ENCODE measurements at regions of chr17 and their contacts with region 1.

Region 1: DNA sequence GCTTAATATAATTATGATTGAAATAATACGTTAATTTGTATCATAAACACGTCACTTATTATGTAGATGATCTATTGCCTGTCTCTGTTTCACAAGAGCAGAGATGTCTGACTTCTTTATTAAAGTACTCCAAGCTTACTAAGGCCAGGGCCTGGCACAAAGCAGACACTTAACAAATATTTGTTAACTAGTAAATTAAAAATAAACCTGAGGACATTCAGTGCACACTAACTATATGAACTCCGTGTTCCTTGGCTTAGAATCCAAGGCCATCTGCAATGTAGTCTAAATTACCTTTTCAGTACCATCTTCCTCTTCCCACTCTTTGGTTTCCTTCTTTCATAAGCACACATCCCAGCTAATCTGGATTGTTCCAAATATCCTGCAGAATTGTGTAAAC is 210.8 kb upstream of the SOX9 start:
- DNase-seq: peak in 1 of 2 donors; percentile 41
- ATAC-seq: peak; percentile 80 to 94
- H3K4me3 ChIP-seq: no peak overlapping the region
- H3K27ac ChIP-seq: peak overlapping the region; percentile 21 to 82 (median 41)
- H3K4me1 ChIP-seq: peaks cover 12 to 36% of the 10 kb centered on the region in 2 donors
- H3K27me3 ChIP-seq: no peaks in the 10 kb centered on the region
- CTCF ChIP-seq: no peak
- POLR2A ChIP-seq: no peak

Region 2: DNA sequence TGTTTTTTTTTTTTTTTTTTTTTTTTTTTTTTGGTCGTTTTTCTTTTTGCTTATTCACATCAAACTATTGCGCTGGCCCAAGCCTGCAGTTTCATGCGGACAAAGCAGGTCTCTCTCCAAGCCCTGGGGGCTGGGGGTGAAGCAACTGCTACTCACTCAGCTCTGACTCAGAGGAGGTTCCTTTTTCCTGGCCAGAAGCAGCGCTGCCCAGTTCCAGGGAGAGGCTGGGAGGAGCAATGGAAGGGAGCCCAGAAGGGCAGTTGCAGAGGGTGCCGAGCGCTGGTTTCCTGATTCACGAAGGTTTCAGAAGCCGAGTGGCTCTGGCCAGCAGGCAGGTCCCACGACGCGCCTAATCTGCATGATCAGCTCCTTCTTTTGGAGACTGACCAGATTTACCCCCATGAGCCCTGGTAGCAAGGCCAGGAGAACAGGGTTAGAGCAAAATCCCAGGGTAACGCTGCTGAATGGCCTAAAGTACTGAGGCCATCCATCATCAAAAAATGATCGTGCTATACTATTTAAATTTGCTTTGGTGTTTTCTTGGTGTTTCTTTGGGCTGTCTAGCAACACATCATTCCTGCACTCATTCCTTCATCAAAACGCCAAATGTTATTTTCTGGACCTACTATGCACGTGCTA is 66.1 kb after region 1 on chr17:
- in situ Hi-C with region 1: loop called in 1 of 4 experiments (anchors 5 kb)
- intact Hi-C with region 1: no loop called
- DNase-seq: peak; percentile 91 to 97
- ATAC-seq: peak; percentile 90 to 96
- H3K4me3 ChIP-seq: peak overlapping the region in 3 of 4 donors; percentile 47 to 59 (median 50)
- H3K27ac ChIP-seq: peak overlapping the region; percentile 85 to 95 (median 92)
- H3K4me1 ChIP-seq: peaks cover 14 to 17% of the 10 kb centered on the region in 2 donors
- H3K27me3 ChIP-seq: no peaks in the 10 kb centered on the region
- CTCF ChIP-seq: no peak
- POLR2A ChIP-seq: no peak

Region 3: DNA sequence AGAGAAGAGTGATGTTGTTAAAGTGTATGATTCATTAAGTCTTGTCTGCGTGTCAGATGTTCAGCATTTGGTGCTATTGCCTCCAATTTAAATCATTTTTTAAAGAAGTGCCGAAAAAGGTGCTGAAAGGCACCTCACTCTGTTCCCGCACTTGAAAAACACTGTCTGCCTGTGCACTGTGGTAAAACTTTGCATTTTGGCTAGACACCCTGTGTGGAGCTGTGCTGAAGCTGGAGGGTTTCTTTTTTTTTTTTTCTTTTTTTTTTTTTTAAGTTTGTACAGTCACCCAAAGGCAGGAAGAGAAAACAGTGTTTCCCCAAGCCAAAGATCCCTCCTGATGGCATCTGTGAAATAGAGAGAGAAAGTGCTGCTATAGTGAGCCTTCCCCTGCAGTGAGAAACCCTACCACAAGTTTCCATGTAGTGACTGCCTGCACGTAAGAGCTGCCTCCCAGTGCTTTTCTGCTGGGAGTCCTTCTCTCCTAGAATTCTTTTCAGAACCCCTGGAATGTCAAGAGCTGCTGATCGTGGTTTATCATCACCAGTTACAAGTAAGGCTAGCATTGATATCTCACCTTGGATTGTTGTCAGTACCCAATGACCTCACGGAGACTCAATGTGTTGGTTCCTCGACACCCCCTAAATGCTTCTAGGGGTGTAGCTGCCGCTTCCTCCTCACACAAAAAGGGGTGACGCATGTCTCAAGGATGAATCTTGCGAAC is 94.8 kb after region 1 on chr17:
- in situ Hi-C with region 1: no loop called
- intact Hi-C with region 1: no loop called
- DNase-seq: no peak
- ATAC-seq: no peak
- H3K4me3 ChIP-seq: no peak overlapping the region
- H3K27ac ChIP-seq: no peak overlapping the region
- H3K4me1 ChIP-seq: no peaks in the 10 kb centered on the region
- H3K27me3 ChIP-seq: no peaks in the 10 kb centered on the region
- CTCF ChIP-seq: no peak
- POLR2A ChIP-seq: no peak

Measured in gastrocnemius medialis (tissue), 4 donors.